CD8-positive, alpha-beta T cell (primary cell): ENCODE measurements at regions of chr4 and their contacts with region 1.

Region 1: DNA sequence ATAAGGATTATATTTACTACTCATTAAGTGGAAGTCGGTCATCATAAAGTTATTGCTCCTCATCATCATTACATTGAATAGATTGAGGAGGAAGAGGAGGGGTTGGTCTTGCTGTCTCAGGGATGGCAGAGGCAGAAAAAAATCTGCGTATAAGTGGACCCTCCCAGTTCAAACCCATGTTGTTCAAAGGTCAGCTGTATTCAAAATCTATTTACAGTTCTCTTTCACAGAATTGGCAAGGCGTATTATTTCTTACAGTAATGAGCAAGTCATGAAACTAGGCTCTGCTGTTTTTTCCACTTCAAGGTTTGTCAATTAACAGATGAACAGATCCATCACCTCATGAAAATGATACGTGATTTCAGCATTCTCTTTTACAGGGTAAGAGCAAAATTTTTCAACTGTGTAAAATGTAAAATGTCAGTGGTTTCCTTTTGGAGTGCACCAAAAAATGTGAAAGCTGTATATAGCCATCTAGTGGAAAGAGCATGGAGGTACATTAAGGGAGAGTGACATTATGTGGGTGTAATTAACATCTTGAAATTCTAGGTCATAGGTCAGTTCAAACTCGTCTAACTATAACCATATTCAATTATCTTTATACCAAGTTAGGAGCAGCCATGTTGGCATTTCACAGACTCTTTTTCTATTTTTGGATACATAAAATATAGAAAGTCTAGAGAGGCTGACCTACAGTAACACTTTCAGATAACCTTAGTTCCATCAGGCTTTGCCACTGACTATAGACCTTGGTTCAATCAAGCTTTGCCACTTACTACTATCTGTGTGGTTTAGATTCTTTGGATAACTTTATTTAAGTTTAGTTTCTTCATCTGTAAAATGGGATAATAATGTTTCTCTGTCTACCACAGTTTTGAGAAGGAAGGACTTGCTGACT is 30.1 kb downstream of the NEIL3 start:
- DNase-seq: peak in 2 of 9 experiments; percentile 48 to 65
- ATAC-seq: peak; percentile 88
- H3K4me3 ChIP-seq: no peak overlapping the region
- H3K4me3 Mint-ChIP-seq: peak overlapping the region; percentile 42
- H3K27ac ChIP-seq: no peak overlapping the region
- H3K27ac Mint-ChIP-seq: no peak overlapping the region
- H3K4me1 ChIP-seq: no peaks in the 10 kb centered on the region
- H3K4me1 Mint-ChIP-seq: peaks cover 5% of the 10 kb centered on the region
- H3K27me3 ChIP-seq: no peaks in the 10 kb centered on the region
- H3K27me3 Mint-ChIP-seq: no peaks in the 10 kb centered on the region
- CTCF ChIP-seq: peak; percentile 60

Region 2: GRCh38 chr4:176377780-176378179 is 961.9 kb before region 1 on chr4:
- CTCF ChIA-PET with region 1: no interaction called
- POLR2A ChIA-PET with region 1: no interaction called
- intact Hi-C with region 1: loop called (anchors 2 to 5 kb)
- DNase-seq: peak in 1 of 9 experiments; percentile 2
- ATAC-seq: no peak
- H3K4me3 ChIP-seq: no peak overlapping the region
- H3K4me3 Mint-ChIP-seq: no peak overlapping the region
- H3K27ac ChIP-seq: no peak overlapping the region
- H3K27ac Mint-ChIP-seq: no peak overlapping the region
- H3K4me1 ChIP-seq: no peaks in the 10 kb centered on the region
- H3K4me1 Mint-ChIP-seq: no peaks in the 10 kb centered on the region
- H3K27me3 ChIP-seq: no peaks in the 10 kb centered on the region
- H3K27me3 Mint-ChIP-seq: peaks cover 8% of the 10 kb centered on the region
- CTCF ChIP-seq: no peak

Region 3: DNA sequence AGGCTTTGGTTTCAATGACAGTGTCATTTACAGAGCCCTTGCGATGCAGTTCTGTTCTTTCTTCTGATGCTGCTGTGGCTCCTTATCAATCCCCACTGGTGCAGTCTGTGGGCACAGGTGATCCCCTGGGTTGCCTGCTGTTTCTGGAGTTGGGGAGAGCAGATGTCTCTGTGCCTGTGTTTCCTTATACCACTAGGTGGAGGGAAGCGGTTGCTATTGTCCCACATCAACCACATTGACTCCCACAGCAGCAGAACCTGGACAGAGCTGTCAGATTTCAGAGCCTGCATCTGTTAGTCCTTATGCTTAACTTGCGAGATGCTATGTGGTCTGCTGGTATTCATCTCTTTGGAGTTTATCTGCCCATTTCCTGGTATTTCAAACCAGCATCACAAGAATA is 27.6 kb after region 1 on chr4:
- CTCF ChIA-PET with region 1: no interaction called
- POLR2A ChIA-PET with region 1: no interaction called
- intact Hi-C with region 1: no loop called
- DNase-seq: peak in 2 of 9 experiments; percentile 26 to 53
- ATAC-seq: no peak
- H3K4me3 ChIP-seq: no peak overlapping the region
- H3K4me3 Mint-ChIP-seq: no peak overlapping the region
- H3K27ac ChIP-seq: no peak overlapping the region
- H3K27ac Mint-ChIP-seq: no peak overlapping the region
- H3K4me1 ChIP-seq: no peaks in the 10 kb centered on the region
- H3K4me1 Mint-ChIP-seq: no peaks in the 10 kb centered on the region
- H3K27me3 ChIP-seq: no peaks in the 10 kb centered on the region
- H3K27me3 Mint-ChIP-seq: no peaks in the 10 kb centered on the region
- CTCF ChIP-seq: no peak

Region 4: DNA sequence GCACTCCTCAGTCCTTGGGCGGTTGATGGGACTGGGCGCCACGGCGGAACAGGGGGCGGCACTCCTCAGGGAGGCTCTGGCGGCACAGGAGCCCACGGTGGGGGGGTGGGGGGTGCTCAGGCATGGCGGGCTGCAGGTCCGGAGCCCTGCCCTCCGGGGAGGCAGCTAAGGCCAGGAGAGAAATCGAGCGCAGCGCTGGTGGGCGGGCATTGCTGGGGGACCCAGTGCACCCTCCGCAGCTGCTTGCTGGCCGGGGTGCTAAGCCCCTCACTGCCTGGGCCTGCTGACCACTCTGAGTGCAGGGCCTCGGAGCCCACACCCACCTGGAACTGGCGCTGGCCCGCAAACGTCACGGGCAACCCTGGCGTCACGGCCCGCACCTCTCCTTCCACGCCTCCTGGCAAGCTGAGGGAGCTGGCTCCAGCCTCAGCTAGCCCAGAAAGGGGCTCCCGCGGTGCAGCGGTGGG is 267.4 kb after region 1 on chr4:
- CTCF ChIA-PET with region 1: no interaction called
- POLR2A ChIA-PET with region 1: no interaction called
- intact Hi-C with region 1: no loop called
- DNase-seq: no peak
- ATAC-seq: no peak
- H3K4me3 ChIP-seq: no peak overlapping the region
- H3K4me3 Mint-ChIP-seq: no peak overlapping the region
- H3K27ac ChIP-seq: no peak overlapping the region
- H3K27ac Mint-ChIP-seq: no peak overlapping the region
- H3K4me1 ChIP-seq: no peaks in the 10 kb centered on the region
- H3K4me1 Mint-ChIP-seq: no peaks in the 10 kb centered on the region
- H3K27me3 ChIP-seq: no peaks in the 10 kb centered on the region
- H3K27me3 Mint-ChIP-seq: no peaks in the 10 kb centered on the region
- CTCF ChIP-seq: no peak